Dendritic cell treated with granulocyte-macrophage colony-stimulating factor and Interleukin-4, amounts not matched to agents 40 ng/mL and 50 ng/mL, for 4 days (primary cell): ENCODE measurements at regions of chr7 and their contacts with region 1.

Region 1: GRCh38 chr7:30564243-30564892 is 30.3 kb upstream of the GARS1 start:
- H3K4me3 Mint-ChIP-seq: no peak overlapping the region
- H3K27ac Mint-ChIP-seq: peak overlapping the region; percentile 33
- H3K4me1 Mint-ChIP-seq: peaks cover 9% of the 10 kb centered on the region
- H3K27me3 Mint-ChIP-seq: no peaks in the 10 kb centered on the region

Region 2: DNA sequence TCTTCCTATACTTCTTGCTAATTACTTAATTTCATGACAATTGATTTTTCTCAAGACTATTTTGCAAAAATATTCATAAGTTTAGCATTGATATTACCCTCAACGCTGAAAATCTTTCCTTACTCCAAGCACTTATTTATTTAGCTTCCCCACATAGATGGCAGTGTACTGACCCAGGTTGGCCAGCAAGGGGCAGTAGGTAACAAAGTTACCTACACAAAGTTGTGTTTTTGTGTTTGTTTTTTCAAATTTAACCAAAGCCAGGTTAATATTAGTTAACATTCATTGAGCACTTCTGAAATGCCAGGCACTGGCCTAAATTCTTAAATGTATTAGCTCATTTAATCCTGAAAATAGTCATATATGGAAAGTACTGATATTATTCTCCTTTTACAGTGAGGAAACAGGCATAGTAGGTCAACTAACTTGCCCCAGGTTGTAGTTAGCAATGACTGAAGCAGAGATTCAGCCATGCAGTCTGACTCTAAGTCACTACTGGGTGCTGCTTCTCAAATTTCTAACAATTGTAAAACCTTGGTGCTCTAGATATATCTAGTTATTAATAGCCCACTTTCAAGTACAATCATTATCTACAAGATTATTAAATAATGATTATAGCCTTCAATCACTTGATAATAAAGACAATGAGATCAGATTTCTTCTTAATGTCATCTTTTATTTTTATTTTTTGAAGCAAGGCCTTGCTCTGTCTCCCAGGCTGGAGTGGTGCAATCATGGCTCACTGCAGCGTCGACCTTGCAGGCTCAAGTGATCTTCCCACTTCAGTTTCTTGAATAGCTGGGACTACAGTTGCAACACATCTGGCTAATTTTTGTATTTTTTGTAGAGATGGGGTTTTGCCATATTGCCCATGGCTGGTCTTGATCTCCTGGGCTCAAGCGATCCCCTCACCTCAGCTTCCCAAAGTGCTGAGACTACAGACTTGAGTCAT is 54.0 kb before region 1 on chr7:
- intact Hi-C with region 1: loop called (anchors 1 kb)
- H3K4me3 Mint-ChIP-seq: no peak overlapping the region
- H3K27ac Mint-ChIP-seq: no peak overlapping the region
- H3K4me1 Mint-ChIP-seq: no peaks in the 10 kb centered on the region
- H3K27me3 Mint-ChIP-seq: no peaks in the 10 kb centered on the region

Region 3: DNA sequence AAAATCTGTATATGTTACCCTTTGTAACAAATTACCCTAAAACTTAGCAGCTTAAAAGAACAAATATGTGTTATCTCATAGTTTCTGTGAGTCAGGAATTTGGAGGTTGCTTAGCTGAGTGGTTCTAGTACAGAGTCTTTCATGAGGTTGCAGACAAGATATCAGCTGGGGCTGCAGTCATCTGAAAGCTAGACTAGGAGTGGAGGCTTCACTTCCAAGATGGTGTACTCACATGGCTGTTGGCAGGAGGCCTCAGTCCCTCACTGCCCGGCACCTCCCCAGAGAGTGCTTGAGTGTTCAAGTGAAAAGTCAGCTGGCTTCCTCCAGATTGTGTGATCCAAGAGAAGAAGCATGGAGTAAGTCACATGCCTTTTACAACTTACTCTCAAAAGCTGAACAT is 42.8 kb before region 1 on chr7:
- intact Hi-C with region 1: no loop called
- H3K4me3 Mint-ChIP-seq: no peak overlapping the region
- H3K27ac Mint-ChIP-seq: peak overlapping the region; percentile 88
- H3K4me1 Mint-ChIP-seq: peaks cover 22% of the 10 kb centered on the region
- H3K27me3 Mint-ChIP-seq: no peaks in the 10 kb centered on the region

Region 4: GRCh38 chr7:30548762-30549344 is 15.5 kb before region 1 on chr7:
- intact Hi-C with region 1: loop called (anchors 1 kb)
- H3K4me3 Mint-ChIP-seq: no peak overlapping the region
- H3K27ac Mint-ChIP-seq: peak overlapping the region; percentile 62
- H3K4me1 Mint-ChIP-seq: peaks cover 34% of the 10 kb centered on the region
- H3K27me3 Mint-ChIP-seq: no peaks in the 10 kb centered on the region